ENCODE measurements at regions of chr5 and their contacts with region 1.

Region 1: DNA sequence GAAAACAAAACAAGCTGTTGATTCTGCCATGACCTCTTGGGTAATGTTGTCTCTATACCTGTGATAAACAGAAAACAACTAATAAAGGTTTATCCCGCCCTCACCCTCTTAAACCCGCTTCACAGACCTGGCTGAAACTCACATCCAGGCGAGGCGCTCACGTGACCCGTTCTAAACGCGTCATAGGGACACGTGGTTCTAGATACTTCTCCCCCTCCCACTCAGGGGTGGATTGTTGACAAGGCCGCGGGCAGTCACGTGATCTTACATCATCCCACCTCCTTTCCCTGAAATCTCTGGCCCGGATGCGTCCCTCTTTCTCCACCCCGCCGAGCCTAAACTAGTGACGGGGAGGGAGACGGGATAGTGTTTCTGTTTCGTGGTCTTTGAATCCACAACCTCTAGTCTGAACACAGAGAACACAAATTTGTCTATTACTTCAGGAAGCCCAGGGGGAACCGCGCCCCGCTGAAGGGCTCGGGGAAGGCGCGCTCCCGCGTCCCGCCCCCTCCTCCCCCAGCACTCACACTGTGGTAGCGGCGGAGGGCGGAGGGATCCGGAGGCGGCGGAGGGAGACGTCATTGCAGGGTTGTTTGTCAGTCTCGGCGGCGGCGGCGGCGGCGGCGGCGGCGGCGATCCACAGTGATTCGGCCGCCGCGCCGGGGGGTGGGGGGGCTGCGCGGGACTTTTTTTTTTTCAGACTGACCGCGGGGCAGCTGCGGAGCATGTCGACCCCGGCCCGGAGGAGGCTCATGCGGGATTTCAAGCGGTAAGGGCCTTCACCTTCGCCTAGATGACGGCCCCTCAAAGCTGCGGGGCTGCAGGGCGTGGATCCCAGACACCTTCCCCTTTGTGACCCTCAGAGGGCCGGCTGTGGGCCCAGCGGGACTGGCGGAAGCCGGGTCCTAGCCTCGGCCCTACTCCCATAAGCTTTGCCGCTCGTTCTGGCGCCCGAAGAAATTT is at the start of gene UBE2B:
- DNase-seq: peak; percentile 100
- ATAC-seq: peak; percentile 86
- H3K4me3 ChIP-seq: peak within 1 kb of the TSS; percentile 93
- H3K27ac ChIP-seq: peak within 1 kb of the TSS; percentile 95
- H3K4me1 ChIP-seq: no peaks in the 10 kb centered on the region
- H3K27me3 ChIP-seq: no peaks in the 10 kb centered on the region
- CTCF ChIP-seq: no peak
- POLR2A ChIP-seq: peak; percentile 69
- RAD21 ChIP-seq: no peak
- total RNA-seq, gene UBE2B: 6.3 and 17.5 TPM in 2 replicates

Region 2: DNA sequence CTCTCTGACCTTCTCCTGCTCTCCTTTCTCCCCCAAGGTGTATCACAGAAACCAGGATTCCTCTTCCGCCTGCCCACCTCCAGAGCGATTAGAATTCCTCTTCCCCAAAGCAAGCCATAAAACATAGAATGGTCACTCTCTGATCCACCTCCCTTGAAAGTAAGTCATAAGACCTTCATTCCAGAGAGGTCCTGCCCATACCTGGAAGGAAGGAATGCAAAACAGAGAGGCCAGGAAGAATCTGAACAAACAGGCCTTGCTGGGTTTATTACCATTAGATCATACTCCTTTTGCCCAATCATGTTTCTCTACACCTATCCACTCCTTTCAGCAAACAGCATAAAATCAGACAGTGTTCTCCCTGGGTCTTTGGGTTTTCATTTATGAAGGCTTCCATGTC is 25.2 kb before region 1 on chr5:
- CTCF ChIA-PET with region 1: no interaction called
- POLR2A ChIA-PET with region 1: interaction called, 15 read pairs
- dilution Hi-C with region 1: no loop called
- in situ Hi-C with region 1: no loop called
- intact Hi-C with region 1: no loop called
- DNase-seq: no peak
- ATAC-seq: no peak
- H3K4me3 ChIP-seq: no peak overlapping the region
- H3K27ac ChIP-seq: no peak overlapping the region
- H3K4me1 ChIP-seq: no peaks in the 10 kb centered on the region
- H3K27me3 ChIP-seq: no peaks in the 10 kb centered on the region
- CTCF ChIP-seq: no peak
- POLR2A ChIP-seq: no peak
- RAD21 ChIP-seq: no peak

Region 3: DNA sequence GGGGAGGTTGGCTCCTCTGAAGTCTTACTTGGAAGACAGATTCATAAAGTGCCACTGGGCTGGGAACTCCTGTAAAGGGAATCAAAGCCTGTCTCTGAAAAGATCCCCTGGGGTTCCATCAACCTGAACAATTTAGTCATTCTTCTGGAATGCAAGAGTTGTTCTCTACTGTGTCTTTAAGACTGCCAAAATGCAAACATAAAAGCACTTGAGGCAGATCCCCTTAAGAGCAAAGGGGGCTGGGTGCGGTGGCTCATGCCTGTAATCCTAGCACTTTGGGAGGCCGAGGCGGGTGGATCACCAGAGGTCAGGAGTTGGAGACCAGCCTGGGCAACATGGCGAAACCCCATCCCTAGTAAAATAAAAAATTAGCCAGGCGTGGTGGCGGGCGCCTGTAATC is 23.8 kb after region 1 on chr5:
- CTCF ChIA-PET with region 1: interaction called, 3 read pairs
- POLR2A ChIA-PET with region 1: no interaction called
- dilution Hi-C with region 1: no loop called
- in situ Hi-C with region 1: no loop called
- intact Hi-C with region 1: loop called (anchors 2 kb)
- DNase-seq: no peak
- ATAC-seq: no peak
- H3K4me3 ChIP-seq: no peak overlapping the region
- H3K27ac ChIP-seq: no peak overlapping the region
- H3K4me1 ChIP-seq: peaks cover 6% of the 10 kb centered on the region
- H3K27me3 ChIP-seq: no peaks in the 10 kb centered on the region
- CTCF ChIP-seq: no peak
- POLR2A ChIP-seq: no peak
- RAD21 ChIP-seq: no peak

Region 4: DNA sequence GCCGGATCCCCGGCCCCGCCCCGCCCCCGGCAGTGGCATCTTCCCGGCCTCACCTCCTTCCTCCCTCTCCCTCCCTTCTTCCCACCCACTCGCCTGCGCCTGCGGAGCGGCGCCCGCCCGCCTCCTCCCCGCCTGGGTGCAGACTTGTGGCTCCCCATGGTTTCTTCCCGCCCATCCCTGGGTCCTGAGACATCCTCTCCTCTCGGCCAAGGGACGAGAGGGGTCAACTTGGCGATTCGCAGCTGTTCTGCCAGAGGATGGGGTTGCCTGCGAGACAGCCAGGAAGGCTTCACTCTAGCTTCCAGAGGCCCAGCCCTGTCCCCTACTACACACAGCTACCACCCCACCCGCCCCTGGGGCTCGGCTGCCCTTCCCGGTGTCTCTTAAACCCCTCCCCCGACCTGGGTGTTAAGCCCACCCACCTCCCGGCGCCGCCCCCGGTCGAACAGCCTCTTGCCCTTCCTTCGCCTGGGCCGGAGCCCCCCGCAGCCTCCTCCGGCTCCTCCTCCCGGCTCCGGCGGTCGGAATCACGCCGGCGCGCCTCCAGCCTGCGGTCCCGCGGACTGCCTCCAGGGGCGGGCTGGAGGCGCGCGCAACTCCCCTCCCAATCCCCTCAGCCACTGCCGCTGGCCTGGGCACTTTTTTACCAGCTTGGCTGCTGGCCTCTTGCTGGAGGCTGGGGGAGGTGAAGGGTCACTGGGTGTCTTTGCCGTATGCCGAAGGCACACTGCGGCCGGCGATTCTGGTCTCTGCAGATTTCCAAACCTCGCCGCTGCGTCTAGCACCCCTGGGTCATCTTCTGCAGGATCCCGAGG is 156.2 kb after region 1 on chr5:
- CTCF ChIA-PET with region 1: no interaction called
- POLR2A ChIA-PET with region 1: interaction called, 5 read pairs
- dilution Hi-C with region 1: no loop called
- in situ Hi-C with region 1: no loop called
- intact Hi-C with region 1: loop called (anchors 1 kb)
- DNase-seq: peak; percentile 90
- ATAC-seq: peak; percentile 73
- H3K4me3 ChIP-seq: peak overlapping the region; percentile 62
- H3K27ac ChIP-seq: peak overlapping the region; percentile 93
- H3K4me1 ChIP-seq: peaks cover 31% of the 10 kb centered on the region
- H3K27me3 ChIP-seq: no peaks in the 10 kb centered on the region
- CTCF ChIP-seq: peak; percentile 86
- POLR2A ChIP-seq: peak; percentile 23; the same call in 1 of the 2 replicates
- RAD21 ChIP-seq: peak; percentile 68

Region 5: GRCh38 chr5:134577796-134578363 is 206.7 kb after region 1 on chr5:
- CTCF ChIA-PET with region 1: no interaction called
- POLR2A ChIA-PET with region 1: no interaction called
- dilution Hi-C with region 1: no loop called
- in situ Hi-C with region 1: no loop called
- intact Hi-C with region 1: loop called (anchors 1 kb)
- DNase-seq: peak; percentile 75
- ATAC-seq: peak; percentile 67
- H3K4me3 ChIP-seq: no peak overlapping the region
- H3K27ac ChIP-seq: no peak overlapping the region
- H3K4me1 ChIP-seq: peaks cover 8% of the 10 kb centered on the region
- H3K27me3 ChIP-seq: no peaks in the 10 kb centered on the region
- CTCF ChIP-seq: peak; percentile 91
- POLR2A ChIP-seq: 0 out of 2 replicates have a peak, but pooled peaks have one; percentile 26
- RAD21 ChIP-seq: peak; percentile 92

Region 6: GRCh38 chr5:134586866-134587524 is 215.8 kb after region 1 on chr5:
- CTCF ChIA-PET with region 1: interaction called, 10 read pairs
- POLR2A ChIA-PET with region 1: no interaction called
- dilution Hi-C with region 1: no loop called
- in situ Hi-C with region 1: no loop called
- intact Hi-C with region 1: no loop called
- DNase-seq: peak; percentile 71
- ATAC-seq: peak; percentile 98
- H3K4me3 ChIP-seq: no peak overlapping the region
- H3K27ac ChIP-seq: no peak overlapping the region
- H3K4me1 ChIP-seq: peaks cover 3% of the 10 kb centered on the region; the same call in 1 of the 2 replicates
- H3K27me3 ChIP-seq: no peaks in the 10 kb centered on the region
- CTCF ChIP-seq: peak; percentile 89
- POLR2A ChIP-seq: no peak
- RAD21 ChIP-seq: peak; percentile 89

Region 7: DNA sequence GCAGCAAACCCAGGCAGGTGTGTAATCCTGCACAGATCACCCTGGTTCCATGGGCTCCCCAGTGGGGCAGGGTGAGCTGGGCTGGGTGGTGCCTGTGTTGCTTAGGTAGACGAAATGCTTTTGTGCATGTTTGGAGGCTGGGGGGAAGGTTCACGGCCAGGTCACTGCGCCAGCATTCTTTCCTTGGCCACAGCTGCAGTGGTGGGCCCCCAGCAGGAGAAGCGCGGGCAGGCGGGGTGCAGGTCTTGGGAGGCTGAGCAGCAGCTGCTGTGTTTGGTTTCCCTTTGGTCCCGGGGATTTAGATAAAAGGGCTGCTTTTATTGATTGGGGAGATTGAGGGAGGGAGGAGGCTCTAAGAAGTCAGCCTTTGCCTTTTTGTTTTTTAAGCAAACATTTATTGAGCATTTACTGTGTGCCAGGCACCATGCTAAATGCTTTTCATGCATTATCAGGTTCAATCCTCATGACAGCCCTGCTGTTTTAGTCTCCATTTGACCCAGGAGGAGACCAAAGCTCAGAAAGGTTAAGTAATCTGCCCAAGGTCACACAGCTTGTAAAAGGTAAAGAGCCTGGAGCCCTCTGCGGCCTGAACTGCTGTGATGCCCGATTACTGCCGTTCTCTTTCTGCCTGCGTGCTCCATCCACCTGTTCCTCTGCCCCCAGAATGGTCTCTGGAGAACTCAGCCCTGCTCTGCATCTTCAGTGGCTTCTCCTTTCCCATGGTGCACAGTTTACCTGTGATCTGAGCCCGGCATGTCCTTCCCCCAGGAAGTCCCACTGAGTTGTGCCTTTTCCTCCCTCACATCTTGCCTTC is 933.4 kb after region 1 on chr5:
- CTCF ChIA-PET with region 1: no interaction called
- POLR2A ChIA-PET with region 1: no interaction called
- dilution Hi-C with region 1: no loop called
- in situ Hi-C with region 1: no loop called
- intact Hi-C with region 1: no loop called
- DNase-seq: peak; percentile 24
- ATAC-seq: no peak
- H3K4me3 ChIP-seq: no peak overlapping the region
- H3K27ac ChIP-seq: no peak overlapping the region
- H3K4me1 ChIP-seq: peaks cover 28% of the 10 kb centered on the region
- H3K27me3 ChIP-seq: no peaks in the 10 kb centered on the region
- CTCF ChIP-seq: no peak
- POLR2A ChIP-seq: no peak
- RAD21 ChIP-seq: no peak